GM12878 (cell line): ENCODE measurements at regions of chr11 and their contacts with region 1.

Region 1: GRCh38 chr11:23112987-23113886 is 253.0 kb upstream of the CCDC179 start:
- DNase-seq: no peak
- ATAC-seq: peak; percentile 83
- H3K4me3 ChIP-seq: no peak overlapping the region
- H3K27ac ChIP-seq: no peak overlapping the region
- H3K4me1 ChIP-seq: no peaks in the 10 kb centered on the region
- H3K27me3 ChIP-seq: no peaks in the 10 kb centered on the region
- CTCF ChIP-seq: peak; percentile 48 to 74 (median 50); a peak in 5 of 6 replicates
- EP300 ChIP-seq: no peak
- POLR2A ChIP-seq: no peak
- RAD21 ChIP-seq: peak; percentile 54

Region 2: DNA sequence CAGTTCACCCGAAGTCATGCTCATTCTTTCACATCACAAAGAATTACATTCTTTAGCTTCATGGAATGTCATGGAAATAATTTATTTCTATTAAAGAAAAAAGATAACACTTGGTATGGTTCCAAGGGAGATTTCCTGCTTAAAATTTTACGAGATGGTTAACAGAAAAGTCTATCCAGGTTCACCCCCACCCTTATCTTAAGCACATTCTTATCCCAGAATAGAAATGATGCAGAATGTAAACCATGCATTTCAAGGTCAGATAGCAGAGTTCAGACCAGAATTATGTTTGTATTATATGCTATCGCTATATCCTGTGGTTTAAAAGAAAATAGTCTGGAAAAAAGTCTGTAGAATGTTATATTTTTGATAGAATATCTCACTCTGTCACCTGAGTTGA is 388.2 kb before region 1 on chr11:
- CTCF ChIA-PET with region 1: no interaction called
- POLR2A ChIA-PET with region 1: no interaction called
- RAD21 ChIA-PET with region 1: no interaction called
- SMC1A ChIA-PET with region 1: no interaction called
- in situ Hi-C with region 1: no loop called
- intact Hi-C with region 1: no loop called
- DNase-seq: no peak
- ATAC-seq: no peak
- H3K4me3 ChIP-seq: no peak overlapping the region
- H3K27ac ChIP-seq: no peak overlapping the region
- H3K4me1 ChIP-seq: no peaks in the 10 kb centered on the region
- H3K27me3 ChIP-seq: no peaks in the 10 kb centered on the region
- CTCF ChIP-seq: no peak
- EP300 ChIP-seq: no peak
- POLR2A ChIP-seq: no peak
- RAD21 ChIP-seq: no peak

Region 3: DNA sequence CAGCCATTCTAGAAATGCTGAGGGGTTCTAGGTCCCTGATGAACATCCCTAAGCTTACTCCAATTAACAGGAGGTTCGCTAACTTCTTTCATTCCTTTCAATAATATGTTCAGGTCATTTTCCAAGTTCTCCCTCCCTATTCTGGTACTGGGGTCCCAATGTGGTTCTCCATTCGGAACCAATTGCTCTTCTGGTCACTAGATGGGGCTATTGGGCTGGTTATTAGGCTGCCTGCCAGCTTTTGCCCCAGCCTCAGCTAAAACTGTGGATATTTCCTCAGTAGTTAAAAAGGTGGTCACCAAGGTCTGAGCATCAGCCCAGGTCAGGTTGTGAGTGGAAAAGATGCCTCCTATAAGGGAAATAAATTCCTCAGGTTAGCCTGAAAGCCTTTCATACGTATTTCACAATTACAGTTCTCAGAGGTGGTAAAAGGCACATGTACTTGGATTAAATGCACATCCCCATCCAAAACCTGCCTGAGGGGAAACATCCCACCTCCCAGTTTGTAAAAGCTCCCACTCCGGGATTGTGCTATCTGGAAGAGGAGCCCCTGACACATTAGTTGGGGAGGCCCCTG is 91.9 kb before region 1 on chr11:
- CTCF ChIA-PET with region 1: interaction called, 141 read pairs
- POLR2A ChIA-PET with region 1: interaction called, 4 read pairs
- RAD21 ChIA-PET with region 1: interaction called, 125 read pairs
- SMC1A ChIA-PET with region 1: interaction called, 123 read pairs
- in situ Hi-C with region 1: no loop called
- intact Hi-C with region 1: loop called (anchors 2 kb)
- DNase-seq: no peak
- ATAC-seq: peak; percentile 77
- H3K4me3 ChIP-seq: no peak overlapping the region
- H3K27ac ChIP-seq: no peak overlapping the region
- H3K4me1 ChIP-seq: no peaks in the 10 kb centered on the region
- H3K27me3 ChIP-seq: no peaks in the 10 kb centered on the region
- CTCF ChIP-seq: peak; percentile 65 to 81 (median 68)
- EP300 ChIP-seq: no peak
- POLR2A ChIP-seq: no peak
- RAD21 ChIP-seq: peak; percentile 69

Region 4: DNA sequence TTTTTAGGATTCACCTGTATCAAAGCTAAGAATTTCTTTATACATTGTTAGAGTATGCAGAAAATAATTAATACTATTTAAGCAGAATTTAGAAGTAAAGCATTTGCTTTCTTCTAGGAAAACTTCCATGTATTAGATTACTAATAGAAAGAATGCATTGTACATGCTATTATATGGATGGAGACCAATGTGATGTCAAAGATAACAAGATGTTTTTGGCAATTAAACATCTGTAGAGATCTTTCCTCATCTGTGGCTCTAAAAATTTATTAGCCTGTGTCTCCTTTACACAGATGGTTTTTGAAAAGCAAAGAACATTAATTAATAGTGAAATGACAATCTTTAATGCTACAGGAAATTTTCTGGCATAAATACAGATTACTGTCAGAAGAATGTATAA is 54.6 kb before region 1 on chr11:
- CTCF ChIA-PET with region 1: interaction called, 19 read pairs
- POLR2A ChIA-PET with region 1: interaction called, 4 read pairs
- RAD21 ChIA-PET with region 1: interaction called, 11 read pairs
- SMC1A ChIA-PET with region 1: interaction called, 20 read pairs
- in situ Hi-C with region 1: no loop called
- intact Hi-C with region 1: no loop called
- DNase-seq: no peak
- ATAC-seq: no peak
- H3K4me3 ChIP-seq: no peak overlapping the region
- H3K27ac ChIP-seq: no peak overlapping the region
- H3K4me1 ChIP-seq: no peaks in the 10 kb centered on the region
- H3K27me3 ChIP-seq: no peaks in the 10 kb centered on the region
- CTCF ChIP-seq: no peak
- EP300 ChIP-seq: no peak
- POLR2A ChIP-seq: no peak
- RAD21 ChIP-seq: no peak

Region 5: GRCh38 chr11:23097891-23098290 is 15.3 kb before region 1 on chr11:
- CTCF ChIA-PET with region 1: interaction called, 52 read pairs
- POLR2A ChIA-PET with region 1: interaction called, 5 read pairs
- RAD21 ChIA-PET with region 1: interaction called, 54 read pairs
- SMC1A ChIA-PET with region 1: interaction called, 91 read pairs
- in situ Hi-C with region 1: no loop called
- intact Hi-C with region 1: no loop called
- DNase-seq: no peak
- ATAC-seq: peak; percentile 92
- H3K4me3 ChIP-seq: no peak overlapping the region
- H3K27ac ChIP-seq: no peak overlapping the region
- H3K4me1 ChIP-seq: no peaks in the 10 kb centered on the region
- H3K27me3 ChIP-seq: no peaks in the 10 kb centered on the region
- CTCF ChIP-seq: no peak
- EP300 ChIP-seq: no peak
- POLR2A ChIP-seq: no peak
- RAD21 ChIP-seq: no peak

Region 6: GRCh38 chr11:23138761-23139160 is 25.5 kb after region 1 on chr11:
- CTCF ChIA-PET with region 1: interaction called, 16 read pairs
- POLR2A ChIA-PET with region 1: no interaction called
- RAD21 ChIA-PET with region 1: interaction called, 4 read pairs
- SMC1A ChIA-PET with region 1: interaction called, 9 read pairs
- in situ Hi-C with region 1: no loop called
- intact Hi-C with region 1: no loop called
- DNase-seq: no peak
- ATAC-seq: no peak
- H3K4me3 ChIP-seq: no peak overlapping the region
- H3K27ac ChIP-seq: no peak overlapping the region
- H3K4me1 ChIP-seq: no peaks in the 10 kb centered on the region
- H3K27me3 ChIP-seq: no peaks in the 10 kb centered on the region
- CTCF ChIP-seq: no peak
- EP300 ChIP-seq: no peak
- POLR2A ChIP-seq: no peak
- RAD21 ChIP-seq: no peak

Region 7: DNA sequence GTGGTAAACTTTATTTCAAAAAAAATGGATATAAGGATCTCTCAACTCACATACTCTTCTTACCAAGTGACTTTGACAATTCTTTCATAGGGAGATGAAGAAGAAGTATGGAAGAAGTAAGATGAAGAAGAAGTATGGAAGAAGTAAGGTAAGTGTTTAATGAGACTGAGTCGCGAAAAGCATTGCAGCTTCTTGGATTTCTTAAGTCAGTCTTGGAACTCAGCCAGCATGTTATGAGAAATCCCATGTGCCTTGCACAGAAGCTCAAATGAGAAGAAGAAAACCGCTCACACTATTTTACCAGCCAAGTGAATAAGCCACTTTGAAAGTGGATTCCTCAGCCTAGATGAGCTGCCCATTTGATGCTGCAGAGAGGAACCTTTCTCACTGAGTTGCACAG is 79.0 kb after region 1 on chr11:
- CTCF ChIA-PET with region 1: no interaction called
- POLR2A ChIA-PET with region 1: no interaction called
- RAD21 ChIA-PET with region 1: no interaction called
- SMC1A ChIA-PET with region 1: no interaction called
- in situ Hi-C with region 1: no loop called
- intact Hi-C with region 1: no loop called
- DNase-seq: no peak
- ATAC-seq: no peak
- H3K4me3 ChIP-seq: no peak overlapping the region
- H3K27ac ChIP-seq: no peak overlapping the region
- H3K4me1 ChIP-seq: no peaks in the 10 kb centered on the region
- H3K27me3 ChIP-seq: no peaks in the 10 kb centered on the region
- CTCF ChIP-seq: no peak
- EP300 ChIP-seq: no peak
- POLR2A ChIP-seq: no peak
- RAD21 ChIP-seq: no peak

Region 8: GRCh38 chr11:23555085-23555484 is 441.8 kb after region 1 on chr11:
- CTCF ChIA-PET with region 1: interaction called, 14 read pairs
- POLR2A ChIA-PET with region 1: no interaction called
- RAD21 ChIA-PET with region 1: interaction called, 4 read pairs
- SMC1A ChIA-PET with region 1: interaction called, 6 read pairs
- in situ Hi-C with region 1: no loop called
- intact Hi-C with region 1: no loop called
- DNase-seq: no peak
- ATAC-seq: no peak
- H3K4me3 ChIP-seq: no peak overlapping the region
- H3K27ac ChIP-seq: no peak overlapping the region
- H3K4me1 ChIP-seq: no peaks in the 10 kb centered on the region
- H3K27me3 ChIP-seq: no peaks in the 10 kb centered on the region
- CTCF ChIP-seq: no peak
- EP300 ChIP-seq: no peak
- POLR2A ChIP-seq: no peak
- RAD21 ChIP-seq: no peak